ENCODE measurements at regions of chr3 and their contacts with region 1.

Region 1: DNA sequence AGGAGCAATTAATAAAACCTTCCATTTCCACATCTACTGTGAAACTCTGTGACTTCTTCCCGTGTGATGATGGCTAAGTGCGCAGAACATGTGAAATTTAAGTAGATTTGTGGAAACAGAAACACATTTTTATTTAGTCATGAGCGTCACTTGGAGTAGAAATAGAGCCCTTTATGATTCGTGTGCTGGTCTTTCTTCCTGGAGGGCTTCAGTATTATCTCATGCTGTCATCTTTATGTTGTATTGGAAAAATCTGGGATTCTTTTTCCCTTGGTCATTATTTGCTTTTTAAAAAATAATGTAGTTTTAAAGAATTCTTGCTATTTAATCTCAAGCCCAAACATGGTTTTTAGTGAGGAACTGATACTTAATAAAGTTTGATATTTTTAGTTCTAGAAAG is 284.0 kb upstream of the CTDSPL start:
- DNase-seq: no peak
- H3K4me3 ChIP-seq: no peak overlapping the region
- H3K27ac ChIP-seq: no peak overlapping the region
- H3K4me1 ChIP-seq: peaks cover 4% of the 10 kb centered on the region
- H3K27me3 ChIP-seq: no peaks in the 10 kb centered on the region
- CTCF ChIP-seq: no peak
- EP300 ChIP-seq: no peak
- POLR2A ChIP-seq: no peak

Region 2: GRCh38 chr3:37526511-37526910 is 51.2 kb before region 1 on chr3:
- intact Hi-C with region 1: loop called in 1 of 4 experiments (anchors 2 kb)
- DNase-seq: peak; percentile 45 to 73 (median 58)
- H3K4me3 ChIP-seq: no peak overlapping the region
- H3K27ac ChIP-seq: no peak overlapping the region
- H3K4me1 ChIP-seq: peaks cover 3% of the 10 kb centered on the region
- H3K27me3 ChIP-seq: no peaks in the 10 kb centered on the region
- CTCF ChIP-seq: no peak
- EP300 ChIP-seq: no peak
- POLR2A ChIP-seq: no peak

Measured in ovary (tissue), 10 donors.